Activated T-helper 1 cell treated with anti-CD3 and anti-CD28 coated beads, Interleukin-12 subunit alpha, Interleukin-12 subunit beta, Interleukin-2, Interleukin-4 antibody, amounts not matched to agents 30 ng/mL and 10 ng/mL and 1 ng/mL, durations not matched to agents 14 hours and 24 hours and 36 hours (primary cell): ENCODE measurements at regions of chr3 and their contacts with region 1.

Region 1: DNA sequence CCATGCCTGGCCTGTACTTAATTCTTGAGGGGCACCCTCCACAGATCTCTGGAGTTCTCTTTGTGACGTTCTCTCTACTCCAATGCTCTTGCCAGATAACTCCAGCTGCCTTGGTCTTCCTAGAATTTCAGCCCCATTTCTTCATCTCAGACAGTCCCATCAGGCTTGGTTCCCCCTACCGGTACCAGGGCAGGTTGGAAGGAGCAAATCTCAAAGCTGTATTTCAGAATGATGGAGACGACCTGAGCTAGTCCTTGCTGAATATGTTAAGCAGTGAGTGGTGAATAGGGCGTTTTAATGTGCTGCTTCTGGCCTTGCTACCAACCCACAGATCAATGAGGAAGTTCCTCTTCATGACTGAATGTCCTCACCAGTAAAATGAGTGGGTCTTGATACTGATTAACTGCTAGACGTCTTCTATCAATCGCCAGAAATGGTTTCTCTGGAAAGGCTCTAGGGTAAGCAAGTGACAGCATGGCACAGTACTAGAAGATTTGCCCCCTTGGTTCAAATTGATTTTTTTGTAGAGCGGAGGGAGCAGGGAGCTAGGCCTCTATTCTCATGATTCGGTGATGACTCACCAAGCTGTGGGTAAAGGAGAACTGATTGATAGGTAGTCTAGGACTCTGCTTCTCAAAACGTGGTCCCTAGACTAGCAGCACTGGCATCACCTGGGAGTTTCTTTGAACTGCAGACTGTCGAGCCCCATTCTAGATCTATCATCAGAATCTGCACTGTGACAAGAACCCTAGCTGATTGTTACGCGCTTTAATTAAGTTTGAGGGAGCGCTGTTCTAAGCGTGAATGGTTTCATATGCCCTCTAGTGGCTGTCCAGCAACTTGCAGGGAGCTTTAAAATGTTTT is 67.8 kb downstream of the UBP1 start:
- DNase-seq: peak; percentile 12
- H3K4me3 Mint-ChIP-seq: no peak overlapping the region
- H3K27ac Mint-ChIP-seq: no peak overlapping the region
- H3K4me1 Mint-ChIP-seq: peaks cover 8% of the 10 kb centered on the region
- H3K27me3 Mint-ChIP-seq: peaks cover 5% of the 10 kb centered on the region

Region 2: GRCh38 chr3:32733631-32734229 is 638.7 kb before region 1 on chr3:
- intact Hi-C with region 1: loop called (anchors 2 kb)
- DNase-seq: no peak
- H3K4me3 Mint-ChIP-seq: no peak overlapping the region
- H3K27ac Mint-ChIP-seq: no peak overlapping the region
- H3K4me1 Mint-ChIP-seq: no peaks in the 10 kb centered on the region
- H3K27me3 Mint-ChIP-seq: no peaks in the 10 kb centered on the region

Region 3: GRCh38 chr3:33074217-33075067 is 298.0 kb before region 1 on chr3:
- intact Hi-C with region 1: loop called (anchors 2 kb)
- DNase-seq: peak; percentile 43
- H3K4me3 Mint-ChIP-seq: no peak overlapping the region
- H3K27ac Mint-ChIP-seq: no peak overlapping the region
- H3K4me1 Mint-ChIP-seq: peaks cover 42% of the 10 kb centered on the region
- H3K27me3 Mint-ChIP-seq: no peaks in the 10 kb centered on the region

Region 4: DNA sequence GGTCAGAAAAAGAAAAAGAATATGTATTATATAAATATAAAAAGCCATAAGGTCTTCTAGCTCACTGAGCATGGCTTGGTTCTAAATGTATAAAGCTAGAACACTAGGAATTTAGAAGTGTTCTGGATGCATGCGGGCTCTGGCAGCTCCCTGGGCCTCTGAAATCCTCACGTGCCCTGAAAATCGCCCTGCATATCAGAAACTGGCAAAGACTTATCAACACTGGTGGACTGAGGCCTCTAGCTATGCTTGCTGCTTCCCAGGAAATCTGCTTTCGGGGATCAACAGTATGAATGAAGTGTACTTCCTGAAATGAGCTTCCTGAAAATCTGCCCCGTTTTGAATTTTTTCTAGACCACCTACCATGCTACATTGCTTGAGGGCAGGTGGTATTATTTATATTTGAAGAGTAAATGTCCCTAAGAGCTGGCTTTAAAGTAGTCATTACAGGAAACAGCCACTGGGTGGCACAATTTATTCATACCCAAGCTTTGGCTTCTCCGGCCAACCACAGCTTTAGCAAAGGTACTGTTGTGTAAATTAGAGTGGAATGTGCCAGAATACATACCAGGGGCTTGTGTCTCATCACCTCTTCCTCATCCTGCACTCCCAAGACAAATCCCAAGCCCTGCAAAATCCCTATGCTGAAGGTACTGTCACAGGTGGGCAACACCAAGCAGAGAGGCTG is 241.0 kb before region 1 on chr3:
- intact Hi-C with region 1: loop called (anchors 1 kb)
- DNase-seq: peak; percentile 18
- H3K4me3 Mint-ChIP-seq: no peak overlapping the region
- H3K27ac Mint-ChIP-seq: no peak overlapping the region
- H3K4me1 Mint-ChIP-seq: peaks cover 7% of the 10 kb centered on the region
- H3K27me3 Mint-ChIP-seq: no peaks in the 10 kb centered on the region

Region 5: GRCh38 chr3:33787328-33788009 is 415.0 kb after region 1 on chr3:
- intact Hi-C with region 1: loop called (anchors 2 kb)
- DNase-seq: peak; percentile 38
- H3K4me3 Mint-ChIP-seq: no peak overlapping the region
- H3K27ac Mint-ChIP-seq: no peak overlapping the region
- H3K4me1 Mint-ChIP-seq: peaks cover 18% of the 10 kb centered on the region
- H3K27me3 Mint-ChIP-seq: peaks cover 18% of the 10 kb centered on the region